Naive thymus-derived CD4-positive, alpha-beta T cell (primary cell): ENCODE measurements at regions of chr15 and their contacts with region 1.

Region 1: GRCh38 chr15:70152070-70152480 is 54.4 kb upstream of the TLE3 start:
- DNase-seq: no peak
- ATAC-seq: peak; percentile 63
- H3K4me3 ChIP-seq: no peak overlapping the region
- H3K4me3 Mint-ChIP-seq: no peak overlapping the region
- H3K27ac ChIP-seq: no peak overlapping the region
- H3K27ac Mint-ChIP-seq: peak overlapping the region in 1 of 9 donors; percentile 46
- H3K4me1 ChIP-seq: no peaks in the 10 kb centered on the region
- H3K4me1 Mint-ChIP-seq: peaks cover 0 to 3% (median 0%) of the 10 kb centered on the region in 7 donors
- H3K27me3 ChIP-seq: no peaks in the 10 kb centered on the region
- H3K27me3 Mint-ChIP-seq: peaks cover 0 to 27% (median 6%) of the 10 kb centered on the region in 5 donors

Region 2: GRCh38 chr15:69523010-69524001 is 628.8 kb before region 1 on chr15:
- CTCF ChIA-PET with region 1: no interaction called
- POLR2A ChIA-PET with region 1: no interaction called
- intact Hi-C with region 1: loop called in 1 of 2 experiments (anchors 1 kb)
- DNase-seq: peak; percentile 17 to 66 (median 40)
- ATAC-seq: peak; percentile 67
- H3K4me3 ChIP-seq: no peak overlapping the region
- H3K4me3 Mint-ChIP-seq: no peak overlapping the region
- H3K27ac ChIP-seq: no peak overlapping the region
- H3K27ac Mint-ChIP-seq: no peak overlapping the region
- H3K4me1 ChIP-seq: no peaks in the 10 kb centered on the region
- H3K4me1 Mint-ChIP-seq: peaks cover 0 to 3% (median 0%) of the 10 kb centered on the region in 7 donors
- H3K27me3 ChIP-seq: no peaks in the 10 kb centered on the region
- H3K27me3 Mint-ChIP-seq: peaks cover 0 to 29% (median 0%) of the 10 kb centered on the region in 5 donors

Region 3: GRCh38 chr15:69593981-69594966 is 557.8 kb before region 1 on chr15:
- CTCF ChIA-PET with region 1: no interaction called
- POLR2A ChIA-PET with region 1: no interaction called
- intact Hi-C with region 1: loop called in 1 of 2 experiments (anchors 5 kb)
- DNase-seq: peak in 1 of 9 donors; percentile 9
- ATAC-seq: peak; percentile 57
- H3K4me3 ChIP-seq: no peak overlapping the region
- H3K4me3 Mint-ChIP-seq: peak overlapping the region in 4 of 10 donors; percentile 7 to 57 (median 20)
- H3K27ac ChIP-seq: no peak overlapping the region
- H3K27ac Mint-ChIP-seq: peak overlapping the region in 1 of 9 donors; percentile 20
- H3K4me1 ChIP-seq: no peaks in the 10 kb centered on the region
- H3K4me1 Mint-ChIP-seq: peaks cover 5 to 17% (median 13%) of the 10 kb centered on the region in 7 donors
- H3K27me3 ChIP-seq: no peaks in the 10 kb centered on the region
- H3K27me3 Mint-ChIP-seq: peaks cover 5 to 21% (median 7%) of the 10 kb centered on the region in 5 donors

Region 4: GRCh38 chr15:69666411-69666882 is 485.6 kb before region 1 on chr15:
- CTCF ChIA-PET with region 1: no interaction called
- POLR2A ChIA-PET with region 1: no interaction called
- intact Hi-C with region 1: no loop called
- DNase-seq: peak in 1 of 9 donors; percentile 10
- ATAC-seq: peak; percentile 68
- H3K4me3 ChIP-seq: no peak overlapping the region
- H3K4me3 Mint-ChIP-seq: peak overlapping the region in 1 of 10 donors; percentile 16
- H3K27ac ChIP-seq: no peak overlapping the region
- H3K27ac Mint-ChIP-seq: peak overlapping the region in 2 of 9 donors; percentile 46 to 88
- H3K4me1 ChIP-seq: peaks cover 20 to 50% of the 10 kb centered on the region in 2 donors
- H3K4me1 Mint-ChIP-seq: peaks cover 14 to 37% (median 34%) of the 10 kb centered on the region in 7 donors
- H3K27me3 ChIP-seq: no peaks in the 10 kb centered on the region
- H3K27me3 Mint-ChIP-seq: peaks cover 0 to 3% (median 0%) of the 10 kb centered on the region in 5 donors

Region 5: DNA sequence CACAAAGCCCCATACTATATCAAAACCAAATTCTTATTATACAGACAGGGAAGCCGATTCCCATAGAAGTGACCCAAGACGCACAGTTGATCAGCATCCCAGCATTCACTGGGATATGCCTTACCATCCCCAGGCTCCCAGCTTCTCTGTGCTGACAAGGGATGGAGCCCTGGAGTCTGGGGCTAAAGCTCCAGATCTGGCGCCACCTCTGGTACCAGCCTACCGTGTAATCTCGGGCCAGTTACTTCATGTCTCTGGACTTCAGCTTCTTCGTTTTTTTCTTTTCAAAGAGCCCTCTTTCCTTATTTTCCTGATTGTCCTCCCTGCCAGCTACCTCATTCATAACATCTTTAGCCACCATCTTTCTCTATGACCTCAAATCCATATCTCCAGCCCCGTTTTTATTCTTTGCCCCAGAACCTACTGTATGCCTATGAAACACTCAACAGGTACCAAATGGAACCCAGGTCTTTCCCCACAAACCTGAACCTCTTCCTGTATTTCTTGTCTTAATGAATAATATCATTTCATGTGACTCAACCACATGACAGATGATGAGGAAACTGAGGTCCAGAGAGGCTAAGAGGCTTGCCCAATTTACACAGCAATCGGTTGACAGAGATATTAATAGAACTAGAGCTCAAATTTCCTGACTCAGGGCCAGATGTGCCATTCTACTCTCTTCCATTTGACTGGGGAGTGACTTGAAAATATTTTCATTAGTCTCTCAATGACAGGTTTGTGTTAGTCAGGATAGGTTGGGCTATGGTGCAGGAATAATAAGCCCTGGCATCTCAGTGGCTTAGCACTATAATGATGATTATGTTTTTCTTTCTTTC is 31.0 kb after region 1 on chr15:
- CTCF ChIA-PET with region 1: no interaction called
- POLR2A ChIA-PET with region 1: no interaction called
- intact Hi-C with region 1: no loop called
- DNase-seq: no peak
- ATAC-seq: no peak
- H3K4me3 ChIP-seq: no peak overlapping the region
- H3K4me3 Mint-ChIP-seq: no peak overlapping the region
- H3K27ac ChIP-seq: no peak overlapping the region
- H3K27ac Mint-ChIP-seq: no peak overlapping the region
- H3K4me1 ChIP-seq: no peaks in the 10 kb centered on the region
- H3K4me1 Mint-ChIP-seq: peaks cover 0 to 14% (median 10%) of the 10 kb centered on the region in 7 donors
- H3K27me3 ChIP-seq: no peaks in the 10 kb centered on the region
- H3K27me3 Mint-ChIP-seq: peaks cover 0 to 33% (median 10%) of the 10 kb centered on the region in 5 donors